AG04449 (cell line): ENCODE measurements at regions of chr11 and their contacts with region 1.

Region 1: DNA sequence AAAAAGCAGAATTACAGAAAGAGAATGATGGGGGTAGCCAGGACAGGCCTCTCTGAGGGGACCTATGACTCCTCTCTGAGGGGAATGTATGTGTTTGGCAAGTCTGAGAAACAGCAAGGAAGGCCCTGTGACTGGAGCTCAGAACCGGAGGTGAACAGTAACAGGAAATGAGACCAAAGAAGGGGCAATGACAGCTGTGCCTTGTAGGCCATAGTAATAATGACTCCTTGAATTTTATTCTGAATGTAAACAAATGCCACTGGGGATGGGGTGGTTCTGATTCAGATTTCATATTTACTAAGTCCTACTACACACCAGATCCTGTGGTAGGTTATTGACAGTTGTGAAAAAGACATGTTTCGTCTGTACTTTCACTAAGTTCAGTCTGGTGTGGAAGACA is 52.8 kb upstream of the APOA1 start:
- DNase-seq: no peak
- H3K4me3 ChIP-seq: no peak overlapping the region
- CTCF ChIP-seq: no peak

Region 2: GRCh38 chr11:116901211-116901610 is 11.0 kb after region 1 on chr11:
- CTCF ChIA-PET with region 1: interaction called, 10 read pairs
- POLR2A ChIA-PET with region 1: no interaction called
- DNase-seq: no peak
- H3K4me3 ChIP-seq: no peak overlapping the region
- CTCF ChIP-seq: no peak